Mammary epithelial cell (primary cell): ENCODE measurements at regions of chr6 and their contacts with region 1.

Region 1: DNA sequence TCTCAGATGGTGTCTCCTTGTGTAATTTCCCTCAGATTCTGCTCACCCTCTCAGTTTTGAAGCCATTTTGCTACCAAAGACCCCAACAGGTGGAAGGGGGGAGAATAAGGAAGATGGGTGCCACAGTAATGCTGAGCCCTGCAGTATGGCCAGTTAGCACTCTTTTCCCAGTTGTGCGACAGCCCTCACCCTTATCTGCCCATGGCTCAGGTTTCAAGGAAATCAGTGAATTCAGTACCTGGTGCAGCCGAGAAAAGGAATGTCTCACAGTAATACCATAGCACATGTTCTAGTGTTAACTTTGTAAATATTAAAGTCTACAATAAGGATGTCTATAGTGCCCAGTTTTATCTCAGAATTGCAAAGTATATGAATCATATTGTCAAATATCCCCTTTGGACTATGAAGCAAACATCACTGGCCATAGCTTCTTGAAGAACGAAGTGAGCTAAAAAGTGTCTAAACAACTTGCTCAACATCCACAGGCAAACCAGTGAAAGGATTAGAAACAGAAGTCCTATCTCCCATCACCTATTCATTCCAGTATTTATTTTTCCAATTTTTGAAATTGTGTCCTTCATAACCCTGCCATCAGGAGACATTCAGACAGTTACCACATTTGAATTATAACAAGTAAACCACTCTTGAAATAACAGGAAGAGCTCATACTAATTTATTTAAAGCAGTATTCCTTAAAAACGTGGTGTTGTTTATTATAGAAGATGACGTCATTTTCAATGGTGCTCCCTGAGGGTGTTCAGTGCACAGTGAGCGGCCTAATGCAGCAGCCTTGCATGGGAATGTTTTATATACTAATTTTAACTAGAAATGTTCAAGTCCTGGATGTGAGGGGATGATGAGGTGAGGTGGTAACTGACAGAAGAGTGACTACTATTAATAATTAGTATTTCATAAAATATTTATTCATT is 366.2 kb downstream of the TFAP2A start:
- DNase-seq: no peak
- H3K4me3 ChIP-seq: no peak overlapping the region
- H3K27ac ChIP-seq: no peak overlapping the region
- H3K4me1 ChIP-seq: no peaks in the 10 kb centered on the region
- H3K27me3 ChIP-seq: no peaks in the 10 kb centered on the region
- CTCF ChIP-seq: no peak

Region 2: GRCh38 chr6:9783567-9783966 is 265.1 kb before region 1 on chr6:
- CTCF ChIA-PET with region 1: no interaction called
- dilution Hi-C with region 1: no loop called
- in situ Hi-C with region 1: no loop called
- intact Hi-C with region 1: no loop called
- DNase-seq: no peak
- H3K4me3 ChIP-seq: no peak overlapping the region
- H3K27ac ChIP-seq: no peak overlapping the region
- H3K4me1 ChIP-seq: no peaks in the 10 kb centered on the region
- H3K27me3 ChIP-seq: peaks cover 2% of the 10 kb centered on the region
- CTCF ChIP-seq: no peak

Region 3: GRCh38 chr6:10014557-10014956 is 34.1 kb before region 1 on chr6:
- CTCF ChIA-PET with region 1: no interaction called
- dilution Hi-C with region 1: loop called (anchors 5 kb)
- in situ Hi-C with region 1: no loop called
- intact Hi-C with region 1: no loop called
- DNase-seq: no peak
- H3K4me3 ChIP-seq: no peak overlapping the region
- H3K27ac ChIP-seq: no peak overlapping the region
- H3K4me1 ChIP-seq: no peaks in the 10 kb centered on the region
- H3K27me3 ChIP-seq: no peaks in the 10 kb centered on the region
- CTCF ChIP-seq: no peak